ENCODE measurements at regions of chr6 and their contacts with region 1.

Region 1: DNA sequence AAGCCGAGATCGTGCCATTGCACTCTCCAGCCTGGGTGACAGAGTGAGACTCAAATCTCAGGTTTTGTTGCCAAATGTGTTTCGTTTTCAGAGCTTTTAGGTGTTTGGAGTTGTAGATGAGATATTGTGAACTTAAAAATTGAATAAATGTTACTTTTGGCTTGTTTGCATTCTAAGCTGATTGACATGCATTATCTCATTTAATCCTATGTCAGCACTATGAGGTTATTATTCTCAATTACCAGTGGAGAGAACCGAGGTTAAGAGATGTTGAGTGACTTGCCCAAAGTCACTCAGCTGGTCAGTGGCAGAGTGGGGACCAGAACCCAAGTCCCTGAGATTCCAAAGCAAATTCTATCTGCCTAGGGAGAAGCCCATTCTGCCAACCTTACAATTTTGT is 72.6 kb upstream of the PIM1 start:
- DNase-seq: no peak
- H3K4me3 ChIP-seq: no peak overlapping the region
- H3K4me3 Mint-ChIP-seq: peak overlapping the region in 1 of 7 donors; percentile 11
- H3K27ac ChIP-seq: no peak overlapping the region
- H3K27ac Mint-ChIP-seq: no peak overlapping the region
- H3K4me1 ChIP-seq: peaks cover 7% of the 10 kb centered on the region
- H3K4me1 Mint-ChIP-seq: peaks cover 10 to 22% (median 16%) of the 10 kb centered on the region in 3 donors
- H3K27me3 ChIP-seq: no peaks in the 10 kb centered on the region
- H3K27me3 Mint-ChIP-seq: no peaks in the 10 kb centered on the region

Region 2: GRCh38 chr6:37038292-37039198 is 58.8 kb before region 1 on chr6:
- CTCF ChIA-PET with region 1: no interaction called
- POLR2A ChIA-PET with region 1: no interaction called
- DNase-seq: no peak
- H3K4me3 ChIP-seq: no peak overlapping the region
- H3K4me3 Mint-ChIP-seq: no peak overlapping the region
- H3K27ac ChIP-seq: peak overlapping the region; percentile 59
- H3K27ac Mint-ChIP-seq: peak overlapping the region in 1 of 8 donors; percentile 63
- H3K4me1 ChIP-seq: no peaks in the 10 kb centered on the region
- H3K4me1 Mint-ChIP-seq: peaks cover 5 to 20% (median 20%) of the 10 kb centered on the region in 3 donors
- H3K27me3 ChIP-seq: no peaks in the 10 kb centered on the region
- H3K27me3 Mint-ChIP-seq: no peaks in the 10 kb centered on the region

Region 3: DNA sequence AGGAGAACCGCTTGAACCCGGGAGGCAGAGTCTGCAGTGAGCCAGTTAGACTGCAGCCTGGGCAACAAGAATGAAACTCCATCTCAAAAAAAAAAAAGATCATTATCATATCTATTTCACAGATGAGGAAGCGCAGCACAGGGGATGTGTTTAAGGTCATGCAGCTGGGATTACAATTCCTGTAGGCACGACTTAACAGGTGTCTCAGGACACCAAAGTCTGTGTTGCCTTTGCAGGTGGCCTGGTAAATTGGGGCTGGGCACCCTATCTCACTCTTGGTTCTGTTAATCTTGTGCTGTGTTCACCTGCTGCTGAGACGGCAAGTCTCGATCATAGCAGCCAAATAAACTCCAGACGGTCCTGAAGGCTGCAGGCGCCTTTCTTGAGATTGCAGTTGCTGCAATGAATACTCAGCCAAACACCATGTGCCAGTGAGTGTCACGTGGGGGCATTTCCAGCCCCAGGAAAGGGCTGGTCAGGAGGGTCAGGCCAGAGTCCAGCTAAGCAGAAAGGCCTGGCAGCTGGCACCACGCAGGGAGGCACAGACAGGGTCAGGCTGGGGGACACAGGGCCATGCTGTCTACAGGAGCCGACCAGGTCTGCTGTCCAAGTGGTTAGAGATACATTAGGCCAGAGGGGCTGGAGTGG is 36.1 kb before region 1 on chr6:
- CTCF ChIA-PET with region 1: interaction called, 3 read pairs
- POLR2A ChIA-PET with region 1: interaction called, 10 read pairs
- DNase-seq: no peak
- H3K4me3 ChIP-seq: no peak overlapping the region
- H3K4me3 Mint-ChIP-seq: no peak overlapping the region
- H3K27ac ChIP-seq: peak overlapping the region; percentile 43
- H3K27ac Mint-ChIP-seq: no peak overlapping the region
- H3K4me1 ChIP-seq: no peaks in the 10 kb centered on the region
- H3K4me1 Mint-ChIP-seq: no peaks in the 10 kb centered on the region
- H3K27me3 ChIP-seq: no peaks in the 10 kb centered on the region
- H3K27me3 Mint-ChIP-seq: no peaks in the 10 kb centered on the region